Activated B cell treated with CpG ODN at 0.5 μM for 24 hours (primary cell): ENCODE measurements at regions of chr3 and their contacts with region 1.

Region 1: GRCh38 chr3:94036909-94037507 is 8.6 kb upstream of the STX19 start:
- DNase-seq: no peak
- ATAC-seq: no peak
- H3K4me3 Mint-ChIP-seq: no peak overlapping the region
- H3K27ac Mint-ChIP-seq: no peak overlapping the region
- H3K4me1 Mint-ChIP-seq: no peaks in the 10 kb centered on the region
- H3K27me3 Mint-ChIP-seq: no peaks in the 10 kb centered on the region
- CTCF ChIP-seq: peak; percentile 18

Region 2: DNA sequence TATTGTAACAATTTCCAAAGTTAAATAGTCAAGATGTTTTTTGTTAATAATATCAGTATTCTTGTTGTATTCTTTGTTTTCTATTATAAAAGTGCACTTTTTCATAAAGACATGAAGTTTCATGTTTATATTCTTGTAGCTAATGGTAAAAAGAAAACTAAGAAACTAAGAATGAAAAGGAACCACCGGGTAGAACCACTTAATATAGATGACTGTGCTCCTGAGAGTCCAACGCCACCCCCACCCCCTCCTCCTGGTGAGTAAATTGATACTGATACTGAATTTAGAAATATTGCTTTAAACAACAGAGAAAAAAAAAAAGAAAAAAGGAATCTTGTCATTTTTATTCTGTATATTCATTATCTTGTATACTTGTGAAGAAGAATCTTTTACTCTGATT is 12.3 kb after region 1 on chr3:
- CTCF ChIA-PET with region 1: no interaction called
- POLR2A ChIA-PET with region 1: interaction called, 14 read pairs
- intact Hi-C with region 1: no loop called
- DNase-seq: no peak
- ATAC-seq: no peak
- H3K4me3 Mint-ChIP-seq: no peak overlapping the region
- H3K27ac Mint-ChIP-seq: no peak overlapping the region
- H3K4me1 Mint-ChIP-seq: no peaks in the 10 kb centered on the region
- H3K27me3 Mint-ChIP-seq: no peaks in the 10 kb centered on the region
- CTCF ChIP-seq: no peak

Region 3: GRCh38 chr3:94062431-94063404 is 25.7 kb after region 1 on chr3 and contains the starts of genes DHFR2 and NSUN3:
- CTCF ChIA-PET with region 1: no interaction called
- POLR2A ChIA-PET with region 1: interaction called, 3 read pairs
- intact Hi-C with region 1: loop called (anchors 2 kb)
- DNase-seq: peak; percentile 74
- ATAC-seq: peak; percentile 88
- H3K4me3 Mint-ChIP-seq: peak within 1 kb of the TSS; percentile 98
- H3K27ac Mint-ChIP-seq: peak within 1 kb of the TSS; percentile 100
- H3K4me1 Mint-ChIP-seq: peaks cover 42% of the 10 kb centered on the region
- H3K27me3 Mint-ChIP-seq: no peaks in the 10 kb centered on the region
- CTCF ChIP-seq: no peak
- total RNA-seq, gene DHFR2: 4.3 and 5.0 TPM in 2 replicates
- total RNA-seq, gene NSUN3: 18.1 and 20.8 TPM in 2 replicates

Region 4: DNA sequence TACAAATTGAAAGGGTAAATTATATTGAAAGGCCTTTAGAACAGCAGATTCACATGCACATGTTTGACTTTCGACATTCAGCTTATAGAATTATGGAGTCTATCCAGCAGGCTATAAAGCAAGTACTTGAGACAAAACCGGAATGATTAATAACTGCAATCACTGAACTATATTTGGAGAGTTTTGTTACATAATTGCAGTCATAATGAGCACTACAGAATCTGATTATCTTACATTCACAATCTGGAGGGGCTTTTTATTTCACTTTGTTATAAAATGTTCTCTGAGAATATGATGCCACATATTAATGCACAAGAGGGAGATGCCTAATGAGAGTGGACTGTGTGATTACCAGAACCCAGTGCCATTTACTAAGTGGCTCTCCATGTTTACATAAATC is 90.1 kb after region 1 on chr3:
- CTCF ChIA-PET with region 1: no interaction called
- POLR2A ChIA-PET with region 1: no interaction called
- intact Hi-C with region 1: no loop called
- DNase-seq: no peak
- ATAC-seq: no peak
- H3K4me3 Mint-ChIP-seq: no peak overlapping the region
- H3K27ac Mint-ChIP-seq: no peak overlapping the region
- H3K4me1 Mint-ChIP-seq: no peaks in the 10 kb centered on the region
- H3K27me3 Mint-ChIP-seq: no peaks in the 10 kb centered on the region
- CTCF ChIP-seq: no peak